Lower leg skin (tissue), 4 donors: ENCODE measurements at regions of chr18 and their contacts with region 1.

Region 1: DNA sequence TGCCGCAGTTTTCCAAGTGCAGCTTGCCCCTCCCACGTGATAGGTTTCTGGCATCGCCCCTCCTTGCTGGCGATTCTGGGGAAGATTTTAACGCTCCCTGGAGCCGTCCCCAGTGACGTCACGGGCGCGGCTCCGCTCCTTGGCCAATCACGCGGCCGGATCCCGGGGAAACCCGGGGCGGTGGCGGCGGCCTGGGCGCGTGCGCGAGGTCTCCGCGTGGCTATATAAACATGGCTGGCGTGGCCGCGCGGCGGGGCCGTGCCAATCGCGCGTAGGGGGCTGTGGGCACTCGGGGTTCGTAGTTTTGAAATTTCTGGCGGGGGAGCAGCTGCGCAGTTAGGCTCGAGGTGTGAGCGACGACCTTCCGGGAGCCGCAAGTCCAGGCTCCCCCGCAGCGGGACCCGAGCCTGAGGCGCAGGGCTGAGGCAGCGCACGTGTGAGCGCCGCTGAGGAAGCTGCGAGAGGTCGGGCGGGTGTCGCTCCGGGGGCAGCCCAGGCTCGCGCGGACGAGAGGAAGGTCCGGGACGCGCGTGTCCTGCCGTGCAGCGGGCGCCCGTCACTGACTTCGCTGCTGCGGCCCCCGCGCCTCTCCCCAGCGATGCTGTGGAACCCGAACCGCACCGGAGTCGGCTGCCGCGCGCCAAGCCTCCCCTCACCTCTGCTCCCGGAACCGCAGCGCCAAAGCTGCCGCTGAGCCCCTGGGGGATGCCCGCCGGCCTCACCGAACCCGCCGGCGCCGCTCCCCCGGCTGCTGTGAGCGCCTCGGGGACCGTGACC is at the start of gene TAF4B:
- DNase-seq: peak; percentile 93 to 99
- H3K4me3 ChIP-seq: peak within 1 kb of the TSS; percentile 88
- CTCF ChIP-seq: no peak
- POLR2A ChIP-seq: no peak
- total RNA-seq, gene TAF4B: 12.5 to 23.6 (median 17.1) TPM

Region 2: GRCh38 chr18:25724121-25724520 is 502.3 kb before region 1 on chr18:
- intact Hi-C with region 1: no loop called
- DNase-seq: no peak
- H3K4me3 ChIP-seq: no peak overlapping the region
- CTCF ChIP-seq: no peak
- POLR2A ChIP-seq: no peak

Region 3: DNA sequence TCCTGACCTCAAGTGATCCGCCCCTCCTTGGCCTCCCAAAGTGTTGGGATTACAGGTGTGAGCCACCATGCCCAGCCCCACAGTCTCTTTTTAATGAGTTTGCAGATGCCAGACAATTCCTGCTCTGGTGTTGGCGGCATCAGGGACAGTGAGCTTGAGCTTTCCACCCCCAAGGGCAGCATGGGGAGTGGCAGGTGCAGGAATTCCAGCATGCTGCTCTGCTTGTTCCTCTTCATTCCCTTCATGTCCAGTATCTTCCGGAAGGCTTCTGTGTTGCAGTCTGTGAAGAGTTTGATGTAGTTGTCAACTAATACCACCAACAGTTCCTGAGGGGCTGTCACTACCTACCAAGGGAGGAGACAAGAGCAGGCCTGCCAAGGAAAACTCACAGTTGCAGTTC is 273.3 kb before region 1 on chr18:
- intact Hi-C with region 1: no loop called
- DNase-seq: no peak
- H3K4me3 ChIP-seq: no peak overlapping the region
- CTCF ChIP-seq: no peak
- POLR2A ChIP-seq: no peak

Region 4: DNA sequence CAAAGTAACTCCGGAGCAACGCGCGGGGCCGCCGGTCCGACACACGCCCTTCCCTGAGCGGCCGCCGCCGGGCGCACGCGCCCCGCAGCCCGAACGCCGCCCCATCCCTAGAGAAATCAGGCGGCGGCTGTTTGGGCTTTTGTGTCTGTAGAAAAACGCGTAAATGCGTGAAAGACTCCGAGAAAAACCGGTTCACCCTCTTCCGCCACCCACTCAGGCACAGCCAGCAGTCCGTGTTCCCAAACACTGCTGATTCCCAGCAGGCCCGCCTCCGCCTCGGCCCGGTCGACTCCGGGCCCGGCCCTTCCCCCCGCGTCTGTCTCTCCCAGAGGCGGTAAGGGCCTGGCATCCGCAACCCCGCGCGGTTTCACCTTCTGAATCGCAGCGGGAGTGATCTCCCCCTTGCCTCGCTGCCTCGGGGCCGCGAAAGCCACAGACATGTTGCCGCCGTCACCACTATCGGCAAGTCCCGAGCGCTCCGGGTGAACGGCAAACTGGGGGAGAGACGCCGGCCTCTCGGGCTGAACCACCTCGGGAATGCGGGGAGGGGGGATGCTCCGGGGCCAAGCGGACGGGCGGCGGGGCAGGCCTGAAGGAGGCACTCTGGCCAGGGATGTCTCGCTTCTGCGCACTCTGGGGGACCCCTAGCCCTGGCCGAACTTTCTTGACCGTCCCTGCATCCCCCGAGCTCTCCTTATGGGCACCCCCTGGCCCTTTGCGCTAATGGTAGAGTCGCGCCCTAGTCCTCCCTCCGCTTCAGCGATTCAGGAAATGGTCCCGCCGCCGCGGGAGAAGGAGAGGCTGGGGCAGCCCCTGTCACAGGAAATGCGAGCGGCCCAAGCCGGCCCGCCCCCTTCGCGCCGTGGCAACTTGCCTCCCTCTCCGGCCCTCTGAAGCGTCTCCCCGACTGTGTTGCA is 136.0 kb before region 1 on chr18 and contains the start of gene SS18:
- intact Hi-C with region 1: loop called (anchors 10 kb)
- DNase-seq: peak; percentile 90 to 99
- H3K4me3 ChIP-seq: peak within 1 kb of the TSS; percentile 97
- CTCF ChIP-seq: no peak
- POLR2A ChIP-seq: peak in 1 of 2 donors; percentile 15
- total RNA-seq, gene SS18: 108 to 287 (median 123) TPM